ENCODE measurements at regions of chr20 and their contacts with region 1.

Region 1: DNA sequence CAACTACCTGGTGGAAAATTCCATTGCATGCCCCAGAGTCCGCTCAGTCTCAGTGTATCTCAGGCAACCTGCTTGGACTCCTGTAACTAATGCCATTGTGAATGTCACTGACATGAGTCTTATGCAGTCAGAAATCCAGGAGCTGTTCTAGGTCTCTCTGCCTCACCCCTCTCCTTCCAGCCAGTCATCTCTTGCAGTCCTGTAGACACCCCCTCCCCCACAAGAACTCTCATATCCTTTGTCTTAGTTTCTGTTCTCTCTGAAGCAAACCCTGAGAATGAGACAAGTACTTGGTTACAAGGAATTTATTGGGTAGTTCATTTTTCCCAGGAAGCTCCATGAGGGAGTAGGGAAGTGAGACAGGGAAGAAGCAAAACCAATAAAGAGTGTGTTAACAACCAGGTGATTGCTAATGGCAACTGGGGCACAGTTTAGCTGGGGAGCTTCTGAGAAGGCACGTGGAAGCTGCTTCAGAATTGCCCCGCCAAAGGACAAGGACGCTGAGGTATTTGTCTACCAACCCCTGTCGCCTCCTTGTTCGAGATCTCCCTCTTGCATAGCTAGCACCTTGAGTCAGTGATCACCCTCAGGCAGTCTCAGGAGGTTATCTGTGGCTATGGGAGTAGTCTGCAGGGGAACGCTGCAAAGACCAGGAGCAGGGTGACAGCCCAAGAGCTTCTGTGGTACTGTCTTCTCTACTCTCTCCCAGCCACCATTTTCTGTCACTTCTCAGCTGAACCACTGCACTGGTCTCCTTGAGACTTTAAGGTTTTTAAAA is 911.4 kb upstream of the FLRT3 start:
- DNase-seq: no peak
- ATAC-seq: no peak

Region 2: GRCh38 chr20:15179781-15180180 is 69.0 kb before region 1 on chr20:
- intact Hi-C with region 1: loop called in 1 of 2 experiments (anchors 10 kb)
- DNase-seq: no peak
- ATAC-seq: no peak

Region 3: GRCh38 chr20:15288106-15288505 is 39.3 kb after region 1 on chr20:
- intact Hi-C with region 1: no loop called
- DNase-seq: no peak
- ATAC-seq: no peak